ENCODE measurements at regions of chr20 and their contacts with region 1.

Region 1: DNA sequence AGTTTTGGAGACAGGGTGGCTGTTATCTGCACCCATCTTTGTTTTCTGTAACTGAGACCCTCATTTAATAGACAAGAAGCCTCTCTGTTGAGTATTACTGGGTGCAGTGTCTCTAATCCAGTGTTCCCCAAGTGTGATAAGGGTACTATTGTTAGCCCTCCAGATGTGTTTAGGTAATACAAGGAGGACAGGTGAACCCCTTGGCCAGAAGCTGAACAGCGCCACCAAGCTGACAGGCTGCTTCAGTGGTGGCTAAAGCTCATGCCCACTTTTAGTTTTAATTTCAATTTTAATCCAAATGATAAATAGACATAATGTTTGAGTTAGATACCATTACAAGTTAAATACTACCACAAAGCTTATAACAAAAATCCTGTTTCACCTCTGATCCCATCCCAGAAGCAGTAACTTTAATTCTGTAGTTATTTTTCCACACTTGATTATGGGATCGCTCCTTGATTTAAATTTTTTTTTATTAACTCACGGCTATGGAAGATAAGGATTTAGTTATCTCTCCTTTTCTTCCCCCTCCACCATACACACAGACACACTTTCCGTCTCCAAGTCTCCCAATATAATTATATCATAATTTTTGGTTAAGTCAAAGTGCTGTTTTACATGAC is 8.4 kb upstream of the STK35 start:
- DNase-seq: no peak
- ATAC-seq: no peak
- H3K4me3 ChIP-seq: no peak overlapping the region
- H3K27ac ChIP-seq: no peak overlapping the region
- H3K4me1 ChIP-seq: no peaks in the 10 kb centered on the region
- H3K27me3 ChIP-seq: peaks cover 13 to 28% (median 18%) of the 10 kb centered on the region in 3 donors
- CTCF ChIP-seq: peak in 1 of 5 experiments; percentile 49
- POLR2A ChIP-seq: no peak

Region 2: GRCh38 chr20:1764136-1765033 is 328.9 kb before region 1 on chr20:
- in situ Hi-C with region 1: loop called in 1 of 4 experiments (anchors 25 kb)
- intact Hi-C with region 1: loop called (anchors 10 kb)
- DNase-seq: peak; percentile 40 to 56
- ATAC-seq: peak; percentile 78 to 89
- H3K4me3 ChIP-seq: no peak overlapping the region
- H3K27ac ChIP-seq: no peak overlapping the region
- H3K4me1 ChIP-seq: no peaks in the 10 kb centered on the region
- H3K27me3 ChIP-seq: no peaks in the 10 kb centered on the region
- CTCF ChIP-seq: peak; percentile 26 to 73 (median 64)
- POLR2A ChIP-seq: no peak

Region 3: GRCh38 chr20:1965520-1966351 is 127.5 kb before region 1 on chr20:
- in situ Hi-C with region 1: loop called in 1 of 4 experiments (anchors 10 kb)
- intact Hi-C with region 1: no loop called
- DNase-seq: peak in 1 of 2 donors; percentile 52
- ATAC-seq: peak; percentile 50 to 66
- H3K4me3 ChIP-seq: peak overlapping the region in 1 of 4 donors; percentile 1
- H3K27ac ChIP-seq: no peak overlapping the region
- H3K4me1 ChIP-seq: peaks cover 6% of the 10 kb centered on the region in 2 donors
- H3K27me3 ChIP-seq: no peaks in the 10 kb centered on the region
- CTCF ChIP-seq: peak; percentile 72 to 93 (median 91)
- POLR2A ChIP-seq: no peak

Region 4: GRCh38 chr20:2301164-2301622 is 207.9 kb after region 1 on chr20:
- in situ Hi-C with region 1: no loop called
- intact Hi-C with region 1: no loop called
- DNase-seq: peak; percentile 17 to 42
- ATAC-seq: peak in 1 of 2 donors; percentile 62
- H3K4me3 ChIP-seq: no peak overlapping the region
- H3K27ac ChIP-seq: no peak overlapping the region
- H3K4me1 ChIP-seq: no peaks in the 10 kb centered on the region
- H3K27me3 ChIP-seq: no peaks in the 10 kb centered on the region
- CTCF ChIP-seq: no peak
- POLR2A ChIP-seq: no peak